ENCODE measurements at regions of chr22 and their contacts with region 1.

Region 1: DNA sequence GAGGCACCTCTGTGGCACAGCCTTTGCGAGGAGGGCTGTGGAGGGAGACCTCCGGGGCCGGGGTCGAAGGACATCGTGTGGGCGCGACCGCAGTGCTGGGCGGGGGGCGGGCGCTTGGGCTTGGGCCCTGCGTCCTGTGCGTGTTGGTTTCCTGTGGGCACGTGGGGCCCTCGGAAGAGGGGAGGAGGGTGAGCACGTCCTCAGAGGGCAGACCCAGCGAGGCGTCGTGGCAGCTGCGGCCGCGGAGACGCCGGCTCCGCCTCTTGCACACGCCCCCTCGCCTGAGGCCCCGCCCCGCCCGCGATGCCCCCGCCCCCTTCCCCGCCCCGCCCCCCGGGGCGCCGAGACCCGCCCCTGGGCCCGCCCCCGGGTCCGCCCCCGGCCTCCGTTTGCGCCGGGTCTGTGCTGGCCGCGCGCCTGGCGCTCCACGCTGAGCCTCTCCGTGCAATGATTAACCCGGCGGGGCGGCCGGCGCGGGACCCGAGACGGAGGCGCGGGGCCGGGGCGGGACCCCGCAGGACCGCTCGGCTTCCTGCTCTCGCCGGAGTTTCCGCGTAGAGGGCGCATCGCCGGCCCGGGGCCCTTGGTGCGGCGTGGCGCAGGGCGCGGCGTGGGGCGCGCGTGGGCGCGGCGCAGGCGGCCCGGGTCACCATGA is at the start of gene PRR5:
- DNase-seq: peak; percentile 73
- ATAC-seq: peak; percentile 93
- H3K4me3 Mint-ChIP-seq: peak within 1 kb of the TSS; percentile 75
- H3K27ac Mint-ChIP-seq: peak within 1 kb of the TSS; percentile 66
- H3K4me1 Mint-ChIP-seq: peaks cover 20% of the 10 kb centered on the region
- H3K27me3 Mint-ChIP-seq: no peaks in the 10 kb centered on the region
- CTCF ChIP-seq: no peak
- total RNA-seq, gene PRR5: 15.5 and 18.0 TPM in 2 replicates

Region 2: GRCh38 chr22:44684506-44685383 is 17.2 kb before region 1 on chr22:
- CTCF ChIA-PET with region 1: interaction called, 4 read pairs
- POLR2A ChIA-PET with region 1: no interaction called
- intact Hi-C with region 1: loop called (anchors 1 kb)
- DNase-seq: peak; percentile 58
- ATAC-seq: peak; percentile 80
- H3K4me3 Mint-ChIP-seq: peak overlapping the region; percentile 47
- H3K27ac Mint-ChIP-seq: no peak overlapping the region
- H3K4me1 Mint-ChIP-seq: peaks cover 34% of the 10 kb centered on the region
- H3K27me3 Mint-ChIP-seq: peaks cover 3% of the 10 kb centered on the region
- CTCF ChIP-seq: peak; percentile 53

Region 3: GRCh38 chr22:44718418-44718817 is 16.5 kb after region 1 on chr22:
- CTCF ChIA-PET with region 1: interaction called, 3 read pairs
- POLR2A ChIA-PET with region 1: interaction called, 3 read pairs
- intact Hi-C with region 1: loop called (anchors 1 kb)
- DNase-seq: no peak
- ATAC-seq: peak; percentile 70
- H3K4me3 Mint-ChIP-seq: no peak overlapping the region
- H3K27ac Mint-ChIP-seq: peak overlapping the region; percentile 63
- H3K4me1 Mint-ChIP-seq: peaks cover 23% of the 10 kb centered on the region
- H3K27me3 Mint-ChIP-seq: no peaks in the 10 kb centered on the region
- CTCF ChIP-seq: no peak

Region 4: GRCh38 chr22:44729391-44730021 is 27.6 kb after region 1 on chr22:
- CTCF ChIA-PET with region 1: interaction called, 53 read pairs
- POLR2A ChIA-PET with region 1: interaction called, 3 read pairs
- intact Hi-C with region 1: no loop called
- DNase-seq: no peak
- ATAC-seq: peak; percentile 60
- H3K4me3 Mint-ChIP-seq: no peak overlapping the region
- H3K27ac Mint-ChIP-seq: no peak overlapping the region
- H3K4me1 Mint-ChIP-seq: peaks cover 10% of the 10 kb centered on the region
- H3K27me3 Mint-ChIP-seq: no peaks in the 10 kb centered on the region
- CTCF ChIP-seq: no peak

Region 5: DNA sequence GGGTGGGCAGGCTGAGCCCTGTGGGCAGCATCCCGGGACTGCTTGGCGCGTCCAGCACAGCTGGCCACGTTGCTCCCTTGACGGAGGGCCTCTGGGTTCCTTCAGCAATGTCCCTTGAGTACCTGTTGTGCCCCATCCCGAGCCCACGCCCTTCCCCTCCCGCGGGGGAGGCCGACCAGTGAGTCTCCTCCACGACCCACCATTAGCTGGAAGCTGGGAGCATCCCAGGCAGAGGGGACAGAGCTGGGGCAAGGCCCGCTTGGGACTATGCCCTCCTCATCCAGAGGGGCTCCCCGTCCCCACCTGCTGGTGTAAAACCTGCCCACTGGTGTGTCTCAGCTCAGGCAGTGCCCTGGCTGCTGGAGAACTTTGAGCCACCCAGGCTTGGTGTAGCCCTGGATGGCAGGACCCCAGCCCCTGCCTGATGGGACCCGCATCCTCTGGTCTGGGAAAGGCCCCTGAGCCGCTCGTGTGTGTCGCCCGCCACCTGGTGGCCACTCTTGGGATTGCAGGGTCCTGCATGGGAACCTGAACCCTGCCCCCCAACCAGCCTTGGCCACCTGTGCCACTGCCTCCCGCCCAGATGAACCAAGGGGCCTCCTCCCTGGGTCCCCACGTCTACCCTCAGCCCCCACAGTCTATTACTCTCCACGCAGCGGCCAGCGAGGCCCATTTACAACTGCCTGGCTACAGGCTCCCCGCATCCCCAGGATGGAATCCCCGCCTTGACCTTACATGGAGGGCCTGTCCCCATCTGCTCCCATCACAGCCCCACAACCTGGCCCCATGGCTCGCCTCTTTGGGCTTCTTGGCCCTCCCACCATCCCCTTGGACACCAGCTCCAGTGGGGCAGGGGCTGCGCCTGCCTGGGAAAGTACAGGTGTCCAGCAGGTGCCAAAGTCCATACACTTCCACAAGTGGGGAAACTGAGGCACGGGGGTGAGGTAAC is 33.9 kb after region 1 on chr22:
- CTCF ChIA-PET with region 1: interaction called, 53 read pairs
- POLR2A ChIA-PET with region 1: no interaction called
- intact Hi-C with region 1: loop called (anchors 1 kb)
- DNase-seq: peak; percentile 88
- ATAC-seq: peak; percentile 89
- H3K4me3 Mint-ChIP-seq: no peak overlapping the region
- H3K27ac Mint-ChIP-seq: no peak overlapping the region
- H3K4me1 Mint-ChIP-seq: peaks cover 3% of the 10 kb centered on the region
- H3K27me3 Mint-ChIP-seq: peaks cover 2% of the 10 kb centered on the region
- CTCF ChIP-seq: peak; percentile 78

Region 6: GRCh38 chr22:44753544-44754194 is 51.7 kb after region 1 on chr22:
- CTCF ChIA-PET with region 1: no interaction called
- POLR2A ChIA-PET with region 1: no interaction called
- intact Hi-C with region 1: no loop called
- DNase-seq: no peak
- ATAC-seq: no peak
- H3K4me3 Mint-ChIP-seq: no peak overlapping the region
- H3K27ac Mint-ChIP-seq: no peak overlapping the region
- H3K4me1 Mint-ChIP-seq: peaks cover 4% of the 10 kb centered on the region
- H3K27me3 Mint-ChIP-seq: peaks cover 51% of the 10 kb centered on the region
- CTCF ChIP-seq: no peak

Region 7: DNA sequence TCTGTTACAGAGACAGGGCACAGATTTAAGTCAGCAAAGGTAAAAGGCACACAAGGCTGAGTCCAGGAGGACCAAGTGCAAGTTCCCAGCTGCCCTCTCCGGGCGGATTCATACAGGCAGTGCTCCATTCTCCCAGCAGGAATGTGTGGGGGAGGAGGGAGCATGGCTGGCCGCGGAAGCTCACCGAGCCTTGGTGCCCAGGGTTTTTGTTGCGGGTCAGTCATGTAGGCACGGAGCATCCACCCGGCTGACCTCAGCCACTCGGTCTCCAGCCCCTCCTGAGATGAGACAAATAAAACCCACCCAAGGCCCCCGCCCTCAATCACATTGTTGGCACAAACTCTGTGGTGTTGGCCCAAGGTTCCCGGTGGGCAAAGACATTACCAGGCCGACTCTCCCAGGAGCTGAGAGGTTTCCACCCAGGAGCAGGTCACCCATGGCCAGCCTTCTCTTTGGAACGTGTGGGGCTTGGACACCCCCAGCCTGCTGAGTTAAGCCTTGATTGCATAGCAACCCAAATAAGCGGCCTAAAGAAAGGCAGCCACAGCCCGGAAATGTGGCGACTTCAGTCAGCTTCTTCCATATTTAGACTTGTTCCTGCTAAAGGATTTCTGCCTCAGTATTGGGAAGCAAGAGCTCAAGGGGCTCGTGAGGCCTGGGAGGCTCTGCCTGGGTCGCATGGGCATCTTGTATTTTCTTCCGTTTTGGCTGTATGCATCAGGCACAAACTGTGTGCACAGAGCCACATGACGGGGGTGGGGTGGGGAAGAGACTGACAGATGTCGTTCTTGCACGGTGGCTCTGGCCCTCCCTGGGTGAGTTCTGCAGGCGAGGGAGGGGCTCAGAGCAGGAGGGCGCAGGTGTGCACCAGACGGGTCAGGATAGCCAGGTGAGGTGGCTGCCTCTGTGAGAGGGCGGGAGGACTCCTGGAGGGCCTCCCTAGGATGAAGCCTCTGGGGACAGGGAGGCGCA is 113.4 kb after region 1 on chr22:
- CTCF ChIA-PET with region 1: no interaction called
- POLR2A ChIA-PET with region 1: no interaction called
- intact Hi-C with region 1: no loop called
- DNase-seq: no peak
- ATAC-seq: no peak
- H3K4me3 Mint-ChIP-seq: no peak overlapping the region
- H3K27ac Mint-ChIP-seq: no peak overlapping the region
- H3K4me1 Mint-ChIP-seq: no peaks in the 10 kb centered on the region
- H3K27me3 Mint-ChIP-seq: peaks cover 11% of the 10 kb centered on the region
- CTCF ChIP-seq: no peak

Measured in activated B cell treated with CpG ODN at 0.5 μM for 24 hours (primary cell).